SK-N-SH (cell line): ENCODE measurements at regions of chr6 and their contacts with region 1.

Region 1: GRCh38 chr6:112180095-112180820 is 74.1 kb downstream of the LAMA4 start:
- DNase-seq: peak; percentile 56
- H3K4me3 ChIP-seq: no peak overlapping the region; a peak in 1 of 4 replicates
- H3K27ac ChIP-seq: no peak overlapping the region; a peak in 2 of 4 replicates
- H3K4me1 ChIP-seq: no peaks in the 10 kb centered on the region; a peak in 2 of 4 replicates
- H3K27me3 ChIP-seq: no peaks in the 10 kb centered on the region
- CTCF ChIP-seq: peak; percentile 86
- EP300 ChIP-seq: no peak
- RAD21 ChIP-seq: peak; percentile 96

Region 2: GRCh38 chr6:112163295-112164257 is 16.7 kb before region 1 on chr6:
- CTCF ChIA-PET with region 1: interaction called, 16 read pairs
- POLR2A ChIA-PET with region 1: no interaction called
- DNase-seq: peak; percentile 83
- H3K4me3 ChIP-seq: no peak overlapping the region; a peak in 1 of 4 replicates
- H3K27ac ChIP-seq: no peak overlapping the region
- H3K4me1 ChIP-seq: no peaks in the 10 kb centered on the region
- H3K27me3 ChIP-seq: no peaks in the 10 kb centered on the region
- CTCF ChIP-seq: peak; percentile 96
- EP300 ChIP-seq: no peak
- RAD21 ChIP-seq: peak; percentile 98

Region 3: DNA sequence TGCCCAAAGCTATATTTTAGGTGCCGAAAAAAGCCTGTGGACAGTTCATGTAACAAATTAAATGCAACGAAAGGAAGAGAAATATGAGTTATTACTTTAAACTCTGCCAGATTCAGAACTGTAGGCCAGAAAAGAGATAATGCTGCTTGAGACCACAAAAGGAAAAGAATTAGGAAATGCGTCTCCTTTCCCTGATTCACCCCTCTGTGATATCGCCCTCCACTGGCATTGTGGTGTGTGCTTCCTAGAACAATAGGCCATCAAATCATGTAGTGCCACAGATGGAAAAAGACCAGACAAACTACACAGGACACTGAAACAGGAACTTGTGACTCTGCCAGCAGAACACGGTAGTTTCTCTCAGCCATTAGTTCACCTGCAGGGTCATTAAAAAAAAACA is 88.9 kb after region 1 on chr6:
- CTCF ChIA-PET with region 1: interaction called, 28 read pairs
- POLR2A ChIA-PET with region 1: no interaction called
- DNase-seq: no peak
- H3K4me3 ChIP-seq: no peak overlapping the region
- H3K27ac ChIP-seq: peak overlapping the region in 1 of 2 experiments; percentile 74; a peak in 2 of 4 replicates
- H3K4me1 ChIP-seq: peaks cover 0 to 19% of the 10 kb centered on the region in 2 experiments; a peak in 2 of 4 replicates
- H3K27me3 ChIP-seq: no peaks in the 10 kb centered on the region
- CTCF ChIP-seq: peak; percentile 41
- EP300 ChIP-seq: no peak
- RAD21 ChIP-seq: peak; percentile 53

Region 4: GRCh38 chr6:112289038-112289566 is 108.8 kb after region 1 on chr6:
- CTCF ChIA-PET with region 1: interaction called, 44 read pairs
- POLR2A ChIA-PET with region 1: no interaction called
- DNase-seq: no peak
- H3K4me3 ChIP-seq: no peak overlapping the region
- H3K27ac ChIP-seq: peak overlapping the region; percentile 72 to 76
- H3K4me1 ChIP-seq: peaks cover 0 to 18% of the 10 kb centered on the region in 2 experiments; a peak in 2 of 4 replicates
- H3K27me3 ChIP-seq: no peaks in the 10 kb centered on the region
- CTCF ChIP-seq: no peak
- EP300 ChIP-seq: no peak
- RAD21 ChIP-seq: no peak

Region 5: GRCh38 chr6:112305795-112306564 is 125.7 kb after region 1 on chr6:
- CTCF ChIA-PET with region 1: interaction called, 111 read pairs
- POLR2A ChIA-PET with region 1: interaction called, 3 read pairs
- DNase-seq: no peak
- H3K4me3 ChIP-seq: no peak overlapping the region
- H3K27ac ChIP-seq: no peak overlapping the region
- H3K4me1 ChIP-seq: peaks cover 0 to 6% of the 10 kb centered on the region in 2 experiments; a peak in 1 of 4 replicates
- H3K27me3 ChIP-seq: no peaks in the 10 kb centered on the region
- CTCF ChIP-seq: no peak
- EP300 ChIP-seq: no peak
- RAD21 ChIP-seq: no peak

Region 6: GRCh38 chr6:112321941-112322424 is 141.7 kb after region 1 on chr6:
- CTCF ChIA-PET with region 1: interaction called, 50 read pairs
- POLR2A ChIA-PET with region 1: no interaction called
- DNase-seq: no peak
- H3K4me3 ChIP-seq: no peak overlapping the region
- H3K27ac ChIP-seq: no peak overlapping the region
- H3K4me1 ChIP-seq: peaks cover 0 to 7% of the 10 kb centered on the region in 2 experiments; a peak in 1 of 4 replicates
- H3K27me3 ChIP-seq: no peaks in the 10 kb centered on the region
- CTCF ChIP-seq: no peak
- EP300 ChIP-seq: no peak
- RAD21 ChIP-seq: no peak